ENCODE measurements at regions of chr12 and their contacts with region 1.

Region 1: DNA sequence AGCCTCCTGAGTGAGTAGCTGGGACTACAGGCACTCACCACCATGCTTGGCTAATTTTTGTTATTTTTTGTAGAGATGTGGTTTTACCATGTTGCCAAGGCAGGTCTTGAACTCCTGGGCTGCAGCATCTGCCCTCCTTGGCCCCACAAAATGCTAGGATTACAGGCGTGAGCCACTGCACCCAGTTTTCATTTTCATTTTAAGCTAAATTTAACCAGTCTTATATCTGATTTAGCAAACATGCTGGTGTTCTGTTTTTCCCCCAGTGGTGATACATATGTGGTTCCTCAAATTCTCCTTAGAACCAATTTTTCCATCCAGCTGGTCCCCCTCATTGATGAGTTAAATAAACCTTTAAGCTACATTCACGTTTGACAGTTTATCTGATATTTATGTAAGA is 43.8 kb upstream of the BICD1 start:
- DNase-seq: no peak
- H3K4me3 ChIP-seq: no peak overlapping the region
- H3K27ac ChIP-seq: no peak overlapping the region
- H3K4me1 ChIP-seq: peaks cover 0 to 8% (median 2%) of the 10 kb centered on the region in 4 donors
- H3K27me3 ChIP-seq: no peaks in the 10 kb centered on the region
- CTCF ChIP-seq: no peak
- EP300 ChIP-seq: no peak
- POLR2A ChIP-seq: no peak

Region 2: GRCh38 chr12:32106517-32107358 is 43.9 kb after region 1 on chr12 and contains the start of gene BICD1:
- intact Hi-C with region 1: loop called (anchors 5 kb)
- DNase-seq: peak; percentile 95
- H3K4me3 ChIP-seq: peak within 1 kb of the TSS; percentile 80 to 97 (median 96)
- H3K27ac ChIP-seq: peak within 1 kb of the TSS; percentile 92 to 98 (median 96)
- H3K4me1 ChIP-seq: peaks cover 26 to 40% (median 32%) of the 10 kb centered on the region in 4 donors
- H3K27me3 ChIP-seq: no peaks in the 10 kb centered on the region
- CTCF ChIP-seq: peak; percentile 38 to 49 (median 45)
- EP300 ChIP-seq: no peak
- POLR2A ChIP-seq: peak; percentile 65
- total RNA-seq, gene BICD1: 6.8 to 14.1 (median 10.2) TPM

Region 3: DNA sequence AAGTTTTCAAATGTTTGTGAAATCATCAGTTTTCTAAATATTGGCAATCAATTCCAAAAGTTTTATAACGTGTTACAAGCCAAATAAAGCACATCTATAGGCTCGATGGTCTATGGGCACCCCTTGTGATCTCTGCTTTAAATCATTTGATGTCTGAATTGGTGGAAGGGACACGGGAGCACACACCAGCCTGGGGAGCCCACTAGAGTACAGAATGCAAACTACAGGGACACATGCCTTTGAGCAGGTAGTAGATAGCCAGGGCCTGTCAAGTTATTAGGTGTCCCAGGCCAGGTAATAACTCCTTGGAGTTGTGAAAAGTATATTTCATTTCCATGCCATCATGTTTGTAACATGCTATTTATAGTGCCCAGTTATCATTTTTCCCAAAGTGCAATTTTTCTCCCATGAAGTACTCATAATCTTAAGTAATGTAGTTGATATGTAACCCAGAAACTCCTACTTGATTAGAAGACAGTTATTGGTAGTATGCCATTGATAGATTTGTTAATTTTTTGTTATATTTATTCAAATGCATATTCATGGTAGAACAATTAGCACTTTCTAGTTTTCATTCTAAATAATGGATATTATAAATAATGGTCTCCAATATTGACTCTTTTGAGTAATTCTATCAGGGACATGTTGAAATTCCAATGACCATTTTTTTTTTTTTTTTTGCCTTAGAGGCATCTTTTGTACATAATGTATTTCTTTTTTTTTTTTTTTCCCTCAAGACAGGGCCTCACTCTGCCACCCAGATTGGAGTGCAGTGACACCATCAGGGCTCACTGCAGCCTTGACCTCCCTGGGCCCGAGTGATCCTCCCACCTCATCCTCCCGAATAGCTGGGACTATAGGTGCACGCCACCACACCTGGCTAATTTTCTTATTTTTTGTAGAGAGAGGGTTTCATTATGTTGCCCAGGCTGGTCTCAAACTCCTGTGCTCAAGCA is 239.6 kb after region 1 on chr12:
- intact Hi-C with region 1: loop called (anchors 5 kb)
- DNase-seq: no peak
- H3K4me3 ChIP-seq: no peak overlapping the region
- H3K27ac ChIP-seq: no peak overlapping the region
- H3K4me1 ChIP-seq: no peaks in the 10 kb centered on the region
- H3K27me3 ChIP-seq: no peaks in the 10 kb centered on the region
- CTCF ChIP-seq: peak; percentile 22 to 33 (median 33)
- EP300 ChIP-seq: no peak
- POLR2A ChIP-seq: no peak

Measured in esophagus muscularis mucosa (tissue), 4 donors.